Psoas muscle (tissue), 8 donors: ENCODE measurements at regions of chr17 and their contacts with region 1.

Region 1: DNA sequence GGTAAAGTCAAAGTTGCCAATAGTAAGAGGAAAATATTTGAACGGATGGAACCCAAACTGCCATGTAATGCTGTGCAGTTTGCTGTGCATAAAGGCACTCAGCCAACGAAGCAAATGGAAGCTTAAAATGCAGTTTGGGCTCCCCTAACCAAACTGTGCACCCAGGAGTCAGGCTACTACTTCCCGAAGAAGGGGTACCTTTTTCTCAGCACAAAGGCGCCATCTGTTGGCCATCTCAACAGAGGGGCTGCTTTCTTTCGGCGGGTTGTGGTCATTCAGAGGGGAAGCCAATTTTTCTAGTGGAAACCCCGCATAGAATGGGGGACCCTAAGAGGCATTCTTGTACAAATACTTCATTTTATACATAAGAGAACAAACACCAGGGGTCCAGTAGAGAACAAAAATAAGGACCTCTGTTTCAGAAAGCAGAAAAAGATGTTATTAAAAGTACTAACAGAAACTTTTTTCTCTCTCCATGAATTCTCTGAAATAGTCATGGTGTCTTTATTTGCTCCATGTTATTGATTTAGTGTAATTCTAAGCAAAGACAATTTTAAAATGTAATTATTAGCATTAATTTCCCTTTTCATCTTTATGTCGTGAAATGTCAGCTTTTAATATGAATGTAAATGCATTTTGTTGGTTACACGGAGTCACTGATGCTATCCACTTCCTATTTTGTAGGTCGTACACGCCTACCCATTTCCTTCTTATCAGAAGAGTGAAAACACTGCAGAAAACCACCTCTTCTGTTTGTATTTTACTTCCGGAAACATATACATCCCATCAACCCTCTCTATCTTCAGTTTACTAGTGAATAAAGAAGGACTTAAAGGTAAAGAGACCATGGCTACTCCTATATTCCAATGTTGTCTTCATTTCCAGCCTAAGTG is 453.3 kb downstream of the KCNJ2 start:
- DNase-seq: peak; percentile 25 to 62
- ATAC-seq: peak; percentile 57 to 83 (median 68)
- H3K4me3 ChIP-seq: peak overlapping the region; percentile 24
- H3K27ac ChIP-seq: no peak overlapping the region
- H3K4me1 ChIP-seq: peaks cover 4% of the 10 kb centered on the region
- H3K27me3 ChIP-seq: no peaks in the 10 kb centered on the region
- CTCF ChIP-seq: peak; percentile 42

Region 2: DNA sequence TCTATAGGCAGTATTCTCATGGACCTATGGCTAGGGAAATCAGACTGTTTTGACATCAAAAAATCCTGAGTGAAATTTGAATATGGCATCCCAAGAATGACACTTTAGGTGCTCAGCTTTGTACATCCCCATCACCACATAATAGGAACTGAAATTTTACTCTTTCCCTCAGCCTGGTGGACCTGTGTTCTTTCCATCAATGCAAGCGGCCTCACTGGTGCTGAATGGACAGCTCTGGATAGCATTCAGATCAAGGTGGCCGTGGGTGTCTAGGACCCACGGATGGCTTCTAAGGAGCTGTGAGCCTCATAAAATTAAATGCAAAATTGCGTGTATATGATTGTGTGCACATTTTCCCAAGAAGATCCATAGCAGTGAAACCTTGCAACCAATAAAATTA is 1055.5 kb before region 1 on chr17:
- intact Hi-C with region 1: loop called (anchors 5 to 10 kb)
- DNase-seq: no peak
- ATAC-seq: peak in 1 of 4 donors; percentile 41
- H3K4me3 ChIP-seq: no peak overlapping the region
- H3K27ac ChIP-seq: no peak overlapping the region
- H3K4me1 ChIP-seq: no peaks in the 10 kb centered on the region
- H3K27me3 ChIP-seq: no peaks in the 10 kb centered on the region
- CTCF ChIP-seq: no peak

Region 3: DNA sequence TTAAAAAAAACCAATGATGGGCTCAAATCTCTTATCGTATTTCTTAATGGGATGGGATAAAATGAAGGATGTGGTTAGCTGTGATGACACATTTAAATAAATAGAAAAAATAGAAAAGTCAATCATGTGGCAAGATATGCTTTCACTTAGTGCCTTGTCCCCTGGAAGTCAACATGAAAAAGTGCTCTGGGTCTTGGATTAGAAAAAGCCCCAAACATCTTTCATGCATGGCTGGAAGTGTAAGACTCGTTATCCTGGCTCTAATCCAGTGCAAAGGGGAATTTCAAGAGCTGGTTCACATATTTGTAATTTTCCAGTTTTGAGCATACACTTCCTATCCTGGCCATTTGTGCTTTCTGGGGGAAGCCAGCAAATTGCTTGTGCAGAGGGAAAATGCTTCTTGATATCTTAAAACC is 1047.3 kb before region 1 on chr17:
- intact Hi-C with region 1: loop called in 1 of 2 experiments (anchors 5 kb)
- DNase-seq: no peak
- ATAC-seq: no peak
- H3K4me3 ChIP-seq: no peak overlapping the region
- H3K27ac ChIP-seq: peak overlapping the region; percentile 11
- H3K4me1 ChIP-seq: peaks cover 3% of the 10 kb centered on the region
- H3K27me3 ChIP-seq: no peaks in the 10 kb centered on the region
- CTCF ChIP-seq: no peak

Region 4: GRCh38 chr17:70184770-70185169 is 437.8 kb before region 1 on chr17:
- intact Hi-C with region 1: loop called in 1 of 2 experiments (anchors 10 kb)
- DNase-seq: no peak
- ATAC-seq: peak; percentile 56 to 84 (median 82)
- H3K4me3 ChIP-seq: no peak overlapping the region
- H3K27ac ChIP-seq: peak overlapping the region; percentile 28
- H3K4me1 ChIP-seq: peaks cover 38% of the 10 kb centered on the region
- H3K27me3 ChIP-seq: no peaks in the 10 kb centered on the region
- CTCF ChIP-seq: no peak